Cardiac septum (tissue), 1 donor: ENCODE measurements at regions of chr3 and their contacts with region 1.

Region 1: DNA sequence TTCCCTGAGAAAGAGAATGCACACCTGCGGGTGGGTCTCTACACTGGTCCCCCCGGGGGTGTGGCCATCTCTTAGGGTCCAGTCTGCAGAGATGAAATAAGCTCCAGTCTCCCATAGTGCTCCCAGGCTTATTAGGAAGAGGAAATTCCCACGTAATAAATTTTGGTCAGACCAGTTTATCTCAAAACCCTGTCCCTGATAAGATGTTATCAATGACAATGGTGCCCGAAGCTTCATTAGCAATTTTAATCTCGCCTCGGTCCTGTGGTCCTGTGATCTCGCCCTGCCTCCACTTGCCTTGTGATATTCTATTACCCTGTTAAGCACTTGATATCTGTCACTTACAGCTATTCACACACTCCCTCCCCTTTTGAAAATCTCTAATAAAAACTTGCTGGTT is 46.8 kb downstream of the OR5H15 start:
- DNase-seq: no peak

Region 2: GRCh38 chr3:98154686-98155085 is 58.6 kb before region 1 on chr3:
- intact Hi-C with region 1: loop called (anchors 2 kb)
- DNase-seq: no peak

Region 3: DNA sequence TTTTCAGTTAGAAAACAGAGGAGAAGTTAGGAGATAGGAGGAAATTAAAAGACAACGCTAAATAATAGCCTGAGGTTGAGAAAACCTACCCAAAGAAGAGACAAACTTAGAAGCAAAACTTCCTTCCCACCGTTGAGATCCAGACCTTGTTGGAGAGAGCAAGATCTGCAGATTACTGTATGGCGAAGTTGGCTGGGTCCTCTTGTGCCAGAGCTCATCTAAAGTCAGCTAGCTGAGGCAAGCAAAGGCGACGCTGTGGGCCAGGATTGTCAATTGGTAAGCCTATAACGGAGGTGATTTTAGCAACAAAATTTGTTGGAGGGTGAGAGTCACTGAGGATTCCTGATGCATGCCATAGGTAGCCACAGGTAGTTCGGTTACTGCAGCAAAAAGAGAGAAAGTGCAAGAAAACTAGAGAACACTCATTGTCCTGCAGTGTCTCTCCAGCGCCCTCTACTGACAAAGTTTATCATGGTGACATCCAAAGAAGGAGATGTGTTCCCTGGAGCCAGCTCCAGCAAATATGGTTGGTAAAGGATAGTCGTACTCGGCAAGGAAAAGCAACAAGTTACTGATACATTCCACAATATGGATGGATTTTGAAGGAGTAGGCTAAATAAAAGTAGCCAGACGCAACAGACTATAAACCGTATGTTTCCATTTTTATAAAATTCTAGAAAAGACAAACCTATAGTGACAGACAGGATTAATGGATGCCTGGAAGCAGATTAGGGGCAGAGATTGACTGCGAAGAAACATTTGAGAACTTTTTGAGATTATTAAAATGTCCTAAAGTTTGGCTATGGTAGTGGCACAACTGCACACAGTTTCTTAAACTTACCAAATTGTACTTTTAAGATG is 130.6 kb after region 1 on chr3:
- intact Hi-C with region 1: no loop called
- DNase-seq: no peak